GM10248 (cell line): ENCODE measurements at regions of chr14 and their contacts with region 1.

Region 1: DNA sequence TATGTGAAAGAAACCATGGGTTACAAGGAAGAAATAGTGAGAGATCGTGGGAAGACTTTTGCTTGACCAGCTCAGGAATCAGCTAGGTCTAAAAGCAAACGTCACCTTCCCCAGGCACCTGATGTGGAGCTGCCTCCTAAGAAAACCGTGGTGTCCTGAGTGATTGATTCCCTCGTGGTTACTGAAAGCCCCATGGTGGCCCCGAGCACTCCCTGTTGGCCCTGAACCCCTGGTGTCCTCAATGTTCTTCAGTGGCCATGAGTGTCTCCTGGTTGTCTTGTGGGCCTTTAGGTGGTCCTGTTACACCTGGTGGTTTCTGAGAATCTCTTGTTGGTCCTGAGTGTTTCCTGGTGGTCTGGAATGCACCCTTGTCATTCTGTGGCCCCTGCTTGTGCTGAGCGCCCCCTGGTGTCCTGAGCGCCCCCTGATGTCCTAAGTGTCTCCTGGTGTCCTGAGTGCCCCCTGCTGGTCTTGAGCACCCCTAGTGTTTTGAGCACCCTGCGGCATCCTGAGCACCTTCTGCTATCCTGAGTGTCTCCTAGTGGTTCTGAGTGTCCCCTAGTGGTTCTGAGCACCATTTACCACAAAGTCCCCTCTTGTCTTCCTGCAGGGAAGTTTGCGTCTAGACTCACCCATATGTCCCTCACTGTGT is 518.7 kb downstream of the TMEM121 start:
- DNase-seq: peak; percentile 65
- CTCF ChIP-seq: peak; percentile 82

Region 2: GRCh38 chr14:106058342-106058741 is 13.3 kb after region 1 on chr14:
- CTCF ChIA-PET with region 1: interaction called, 15 read pairs
- POLR2A ChIA-PET with region 1: no interaction called
- DNase-seq: no peak
- CTCF ChIP-seq: no peak